Right ventricle myocardium inferior (tissue), 1 donor: ENCODE measurements at regions of chr7 and their contacts with region 1.

Region 1: DNA sequence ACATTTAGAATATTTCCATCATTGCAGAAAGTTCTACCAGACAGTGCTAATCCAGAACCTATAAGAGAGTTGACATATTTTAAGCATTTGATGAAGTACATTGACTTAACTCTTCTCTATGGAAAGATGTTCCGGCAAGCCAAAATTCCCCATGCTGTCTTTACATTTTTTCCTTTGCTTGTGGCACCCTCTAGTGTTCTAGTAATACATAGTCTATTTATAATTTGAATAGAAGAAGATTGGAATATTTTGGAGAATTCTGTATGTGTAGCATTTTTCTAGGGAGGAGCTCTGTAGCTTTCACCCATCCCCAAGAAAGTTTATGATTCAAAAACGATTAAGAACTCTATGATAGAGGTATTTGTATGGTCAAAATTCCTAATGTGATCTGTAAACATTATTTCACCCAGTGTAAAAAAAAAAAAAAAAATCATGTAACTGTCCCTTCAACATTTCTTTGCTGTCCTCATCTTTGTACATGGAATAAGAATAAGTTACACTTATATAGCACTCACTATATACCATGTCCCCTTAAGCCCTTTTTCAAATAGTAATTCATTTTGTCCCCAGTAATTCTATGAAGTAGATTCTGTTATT is 33.2 kb downstream of the NRF1 start:
- DNase-seq: no peak
- ATAC-seq: no peak

Region 2: GRCh38 chr7:129218514-129219062 is 426.1 kb before region 1 on chr7:
- intact Hi-C with region 1: loop called (anchors 10 kb)
- DNase-seq: peak; percentile 88
- ATAC-seq: peak; percentile 90

Region 3: DNA sequence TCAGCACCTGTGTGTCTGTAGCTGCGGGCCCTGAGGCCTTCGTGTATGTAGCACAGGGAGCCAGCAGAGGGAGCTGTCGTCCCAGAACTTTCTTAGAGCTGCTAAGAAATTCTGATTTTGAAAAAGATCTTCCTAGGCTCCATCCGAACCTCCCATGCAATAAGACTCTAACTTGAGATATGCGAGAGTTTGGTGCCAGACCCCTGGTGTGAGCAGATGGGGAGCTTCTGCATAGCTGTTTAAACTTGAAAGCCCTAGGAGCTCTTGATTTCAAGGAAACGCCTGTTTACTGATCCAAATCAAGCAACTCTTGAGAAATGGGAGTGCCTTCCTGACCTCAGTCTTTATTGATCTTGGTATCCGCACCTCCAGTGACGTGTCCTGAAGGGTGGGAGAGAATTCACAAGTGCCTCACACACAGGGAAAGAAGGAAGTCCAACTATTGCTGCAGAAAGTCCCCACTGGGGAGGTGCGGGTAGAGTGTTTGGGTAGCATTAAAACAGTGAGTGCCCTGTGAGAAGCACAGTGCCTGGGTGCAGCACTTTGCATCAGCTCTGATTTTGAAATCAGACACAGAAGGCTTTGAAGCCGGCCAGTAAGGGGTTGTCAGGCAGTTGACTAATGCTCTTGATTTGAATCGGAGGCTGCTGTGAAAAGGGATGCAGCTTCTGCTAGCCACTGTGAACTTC is 276.9 kb before region 1 on chr7:
- intact Hi-C with region 1: loop called (anchors 5 kb)
- DNase-seq: peak; percentile 86
- ATAC-seq: peak; percentile 84

Region 4: GRCh38 chr7:129502376-129502776 is 142.4 kb before region 1 on chr7 and contains the start of gene SMKR1:
- intact Hi-C with region 1: loop called (anchors 10 kb)
- DNase-seq: peak; percentile 90
- ATAC-seq: peak; percentile 89
- total RNA-seq, gene SMKR1: not detected

Region 5: DNA sequence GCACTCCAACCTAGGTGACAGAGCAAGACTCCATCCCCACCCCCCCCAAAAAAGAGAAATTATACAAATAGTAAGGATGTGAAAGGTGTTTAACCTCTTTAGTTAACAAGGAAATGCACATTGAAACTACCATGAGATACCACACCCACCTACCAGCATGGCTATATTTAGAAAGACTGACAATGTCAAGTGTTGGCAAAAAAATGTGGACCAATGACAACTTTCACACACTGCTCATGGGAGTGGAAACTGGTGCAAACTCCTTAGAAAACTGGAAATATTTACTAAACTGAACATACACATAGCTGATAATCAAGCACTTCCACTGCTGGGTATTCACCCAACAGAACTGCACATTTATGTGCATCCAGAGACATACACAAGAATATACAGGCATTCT is 56.5 kb before region 1 on chr7:
- intact Hi-C with region 1: loop called (anchors 10 kb)
- DNase-seq: no peak
- ATAC-seq: no peak

Region 6: DNA sequence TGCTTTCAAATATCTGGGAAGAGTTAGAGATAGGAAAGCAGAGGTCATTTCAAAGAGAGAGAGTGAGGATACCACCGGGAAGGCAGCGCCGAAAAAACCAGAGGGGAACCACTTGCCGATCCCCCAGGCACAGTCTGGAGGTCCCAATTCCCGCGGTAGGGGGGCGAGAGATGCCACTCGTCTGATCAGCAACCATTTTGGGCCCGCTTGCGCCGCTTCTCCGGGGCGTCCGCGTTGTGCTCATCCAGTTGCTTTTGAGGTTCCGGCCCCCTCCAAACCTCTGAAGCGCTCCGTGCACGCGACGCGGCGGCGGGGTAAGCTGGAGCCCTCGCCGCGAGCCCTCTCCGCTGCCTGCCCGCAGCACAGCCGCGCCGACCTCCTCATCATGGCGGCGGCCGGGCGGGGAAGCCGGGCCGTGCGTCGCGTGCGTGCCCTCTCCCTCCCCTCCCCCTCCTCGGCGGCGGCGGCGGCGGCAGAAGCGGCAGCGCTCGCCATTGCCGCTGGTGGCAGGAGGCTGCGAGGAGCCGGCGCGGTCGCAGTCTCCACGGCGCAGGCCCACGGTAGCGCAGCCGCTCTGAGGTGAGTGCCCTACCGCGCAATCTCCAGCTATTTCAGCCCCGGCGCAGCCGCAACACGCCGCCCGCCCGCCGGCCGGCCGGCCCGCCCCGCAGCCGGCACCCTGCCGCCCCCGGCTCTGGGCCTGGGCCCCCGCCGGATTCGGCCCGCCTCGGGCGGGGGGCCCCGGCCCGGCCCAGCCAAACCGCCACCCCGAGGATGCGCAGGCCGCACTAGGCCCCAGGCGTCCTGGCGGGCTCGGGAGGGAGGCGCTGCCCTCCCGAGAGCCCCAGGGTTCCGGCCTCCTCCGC is 33.3 kb before region 1 on chr7 and contains the start of gene NRF1:
- intact Hi-C with region 1: loop called (anchors 5 kb)
- DNase-seq: peak; percentile 96
- ATAC-seq: peak; percentile 99
- total RNA-seq, gene NRF1: 7.8 TPM

Region 7: GRCh38 chr7:129906700-129907099 is 262.0 kb after region 1 on chr7:
- intact Hi-C with region 1: no loop called
- DNase-seq: no peak
- ATAC-seq: peak; percentile 44